ENCODE measurements at regions of chr3 and their contacts with region 1.

Region 1: GRCh38 chr3:119098619-119099222 is 47.2 kb upstream of the TEX55 start:
- DNase-seq: no peak
- ATAC-seq: peak; percentile 43
- H3K4me3 ChIP-seq: no peak overlapping the region
- H3K27ac ChIP-seq: no peak overlapping the region
- H3K4me1 ChIP-seq: no peaks in the 10 kb centered on the region
- H3K27me3 ChIP-seq: no peaks in the 10 kb centered on the region
- CTCF ChIP-seq: peak; percentile 60

Region 2: GRCh38 chr3:118884748-118885206 is 213.9 kb before region 1 on chr3:
- intact Hi-C with region 1: loop called (anchors 10 kb)
- DNase-seq: peak; percentile 86
- ATAC-seq: peak; percentile 90
- H3K4me3 ChIP-seq: no peak overlapping the region
- H3K27ac ChIP-seq: no peak overlapping the region
- H3K4me1 ChIP-seq: no peaks in the 10 kb centered on the region
- H3K27me3 ChIP-seq: peaks cover 8% of the 10 kb centered on the region
- CTCF ChIP-seq: peak; percentile 84